ENCODE measurements at regions of chr2 and their contacts with region 1.

Region 1: DNA sequence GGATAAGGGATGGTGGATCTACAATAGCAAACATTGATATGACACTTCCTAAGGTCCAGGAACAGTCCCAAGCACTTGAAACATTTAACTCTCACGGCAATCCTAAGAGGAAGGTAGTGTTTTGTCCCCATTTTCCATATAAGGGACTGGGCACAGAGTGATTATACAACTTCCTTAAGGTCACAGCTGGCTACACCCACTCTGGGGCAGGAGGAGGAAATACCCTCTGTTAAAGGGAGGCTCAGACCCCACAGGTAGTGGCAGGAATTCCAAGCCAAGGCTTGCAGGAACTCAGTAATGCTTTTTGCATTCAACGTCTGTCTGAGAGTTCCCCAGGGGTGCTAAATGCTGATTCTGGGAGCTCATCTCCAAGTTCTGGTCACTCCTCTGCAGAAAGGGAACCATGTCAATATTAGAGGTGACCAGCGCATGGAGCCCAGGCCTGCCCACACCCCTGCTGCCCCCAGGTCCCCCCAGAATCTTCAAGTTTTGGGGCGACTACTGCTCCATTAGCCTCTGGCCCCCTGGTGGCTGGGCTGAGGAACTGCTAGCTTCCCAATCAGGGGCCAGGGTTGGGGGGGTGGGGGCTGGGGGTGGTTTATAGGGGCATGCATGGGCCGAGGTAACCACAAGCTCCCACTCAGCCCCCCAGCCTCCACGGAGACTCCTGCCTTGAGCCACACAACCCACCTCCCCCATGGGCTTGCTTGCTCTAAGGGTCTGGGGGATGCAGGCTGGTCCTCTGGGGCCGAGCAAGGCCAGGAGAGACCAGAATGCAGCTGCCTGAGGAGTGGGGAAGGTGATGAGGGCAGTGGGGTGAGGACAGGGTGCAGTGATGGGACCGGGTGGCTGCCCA is 11.1 kb downstream of the OBSL1 start:
- H3K4me3 ChIP-seq: no peak overlapping the region
- H3K27ac ChIP-seq: no peak overlapping the region
- H3K4me1 ChIP-seq: no peaks in the 10 kb centered on the region
- CTCF ChIP-seq: no peak

Region 2: DNA sequence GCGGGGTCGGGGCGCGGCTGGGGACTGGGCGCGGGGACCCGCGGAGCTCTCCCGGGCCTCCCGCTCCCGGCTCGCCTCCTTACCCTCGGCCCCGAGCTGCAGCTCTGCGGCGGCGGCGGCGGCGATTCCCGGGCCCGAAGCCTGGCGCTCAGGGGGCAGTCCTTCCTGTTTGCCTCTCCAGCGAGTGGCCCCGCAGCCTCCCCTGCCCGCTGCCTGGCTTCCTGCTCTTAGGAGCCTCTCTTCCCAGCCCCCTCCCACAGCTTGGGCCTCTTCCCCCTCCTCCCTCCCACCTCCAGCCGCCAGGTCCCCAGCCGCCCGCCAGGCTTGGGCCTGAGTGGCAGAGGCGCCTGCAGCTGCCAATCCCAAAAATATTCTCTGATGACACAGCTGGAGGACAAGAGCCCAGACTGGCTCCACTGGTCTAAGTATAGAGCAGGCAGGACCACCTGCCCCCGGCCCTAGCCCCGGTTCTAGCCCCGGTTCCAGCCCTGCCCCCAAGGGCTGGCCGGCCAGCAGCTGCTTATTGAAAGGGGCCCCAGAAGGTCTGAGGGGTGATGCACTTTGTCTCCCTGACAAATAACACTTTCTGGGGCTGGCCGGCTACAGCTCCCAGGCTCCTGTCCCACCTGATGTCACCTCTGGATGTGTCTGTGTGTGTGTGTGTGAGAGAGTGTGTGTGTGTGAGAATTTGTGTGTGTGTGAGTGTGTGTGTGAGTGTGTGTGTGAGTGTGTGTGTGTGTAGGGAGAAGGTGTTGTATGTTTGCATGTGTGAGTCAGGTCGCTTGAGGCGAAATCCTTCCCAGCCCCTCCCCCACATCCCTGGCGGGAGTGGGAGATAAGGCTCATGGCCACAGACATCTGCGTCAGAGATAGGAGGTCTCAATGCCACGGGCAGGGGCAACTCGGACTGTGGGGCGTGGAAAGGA is 11.3 kb after region 1 on chr2 and contains the start of gene OBSL1:
- CTCF ChIA-PET with region 1: interaction called, 32 read pairs
- POLR2A ChIA-PET with region 1: interaction called, 18 read pairs
- H3K4me3 ChIP-seq: peak within 1 kb of the TSS; percentile 91
- H3K27ac ChIP-seq: peak within 1 kb of the TSS; percentile 86
- H3K4me1 ChIP-seq: peaks cover 14% of the 10 kb centered on the region
- CTCF ChIP-seq: no peak; the same call in 1 of the 2 replicates

Region 3: GRCh38 chr2:219597552-219598307 is 37.5 kb after region 1 on chr2 and contains the start of gene STK11IP:
- CTCF ChIA-PET with region 1: interaction called, 10 read pairs
- POLR2A ChIA-PET with region 1: interaction called, 6 read pairs
- H3K4me3 ChIP-seq: peak within 1 kb of the TSS; percentile 84
- H3K27ac ChIP-seq: peak within 1 kb of the TSS; percentile 85
- H3K4me1 ChIP-seq: peaks cover 6% of the 10 kb centered on the region
- CTCF ChIP-seq: no peak

Region 4: GRCh38 chr2:219642465-219643080 is 82.3 kb after region 1 on chr2:
- CTCF ChIA-PET with region 1: interaction called, 15 read pairs
- POLR2A ChIA-PET with region 1: no interaction called
- H3K4me3 ChIP-seq: no peak overlapping the region
- H3K27ac ChIP-seq: no peak overlapping the region
- H3K4me1 ChIP-seq: no peaks in the 10 kb centered on the region
- CTCF ChIP-seq: peak; percentile 100